Calu3 (cell line): ENCODE measurements at regions of chr9 and their contacts with region 1.

Region 1: GRCh38 chr9:119556129-119556875 is 187.1 kb upstream of the BRINP1 start:
- DNase-seq: peak; percentile 74
- H3K4me3 Mint-ChIP-seq: peak overlapping the region; percentile 55
- H3K27ac Mint-ChIP-seq: no peak overlapping the region
- H3K4me1 Mint-ChIP-seq: no peaks in the 10 kb centered on the region
- H3K27me3 Mint-ChIP-seq: peaks cover 16% of the 10 kb centered on the region
- CTCF ChIP-seq: peak; percentile 53

Region 2: DNA sequence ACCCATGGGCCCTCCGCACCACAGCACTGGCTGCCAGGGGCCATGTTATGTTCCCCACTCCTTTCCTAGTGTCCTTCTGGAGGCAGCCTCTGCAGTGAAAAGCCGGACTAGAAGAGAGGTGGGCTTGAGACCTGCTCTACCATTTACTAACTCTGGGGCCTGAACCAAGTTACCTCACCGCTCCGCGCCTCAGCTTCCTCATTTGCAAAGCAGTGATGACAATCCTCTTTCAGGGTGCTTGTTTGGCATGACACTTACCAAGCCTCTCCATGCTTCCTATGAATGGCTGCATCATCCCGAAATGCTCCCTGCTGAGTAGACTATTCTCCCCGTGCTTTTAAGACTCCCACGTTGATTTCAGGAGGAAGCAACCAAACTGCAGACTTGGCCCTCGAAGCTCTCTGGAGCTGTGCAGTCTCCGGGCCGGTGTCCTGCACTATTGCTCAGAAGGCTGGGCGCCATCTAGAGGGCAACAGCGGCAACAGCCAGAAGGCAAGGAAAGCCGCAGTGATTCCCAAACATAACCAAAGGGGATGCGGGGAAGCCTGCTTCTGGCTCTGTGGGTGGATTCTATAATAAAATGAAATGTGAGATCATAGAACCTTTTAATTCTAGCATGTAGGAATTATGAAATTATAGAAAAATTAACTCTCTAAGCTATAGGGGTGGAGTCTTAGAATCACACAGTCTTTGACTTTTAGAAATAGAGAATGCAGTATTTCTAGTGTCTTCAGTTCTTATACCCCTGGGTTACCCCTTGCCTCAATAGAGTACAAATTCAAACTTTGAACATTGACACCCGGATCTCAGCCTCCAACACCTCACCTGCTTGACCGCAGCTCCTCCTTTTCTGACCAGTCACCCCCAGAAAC is 412.8 kb after region 1 on chr9:
- CTCF ChIA-PET with region 1: no interaction called
- intact Hi-C with region 1: loop called (anchors 10 kb)
- DNase-seq: peak; percentile 65
- H3K4me3 Mint-ChIP-seq: no peak overlapping the region
- H3K27ac Mint-ChIP-seq: no peak overlapping the region
- H3K4me1 Mint-ChIP-seq: no peaks in the 10 kb centered on the region
- H3K27me3 Mint-ChIP-seq: peaks cover 36% of the 10 kb centered on the region
- CTCF ChIP-seq: peak; percentile 57

Region 3: DNA sequence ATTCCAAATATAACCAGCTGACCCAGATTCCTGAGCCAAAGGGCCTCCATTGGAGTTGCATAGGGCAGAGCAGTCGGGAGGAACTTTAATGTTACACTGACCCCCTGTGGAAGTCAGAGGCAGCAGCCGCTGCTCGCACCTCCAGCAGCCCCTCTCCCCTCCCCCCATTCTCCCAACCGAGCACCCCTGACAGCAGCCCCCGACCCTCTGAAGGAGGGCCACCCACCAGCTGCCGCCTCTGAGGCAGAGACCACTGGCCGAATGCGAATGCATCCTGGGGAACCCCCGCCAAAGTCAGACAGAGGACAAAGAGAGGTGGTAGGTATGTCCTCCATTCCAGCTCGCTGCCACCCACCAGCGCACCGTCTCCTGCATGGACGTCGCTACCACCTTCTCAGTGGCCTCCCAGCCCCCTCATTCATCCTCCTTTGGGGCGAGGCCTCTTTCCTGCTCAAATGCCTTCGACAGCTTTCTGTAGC is 792.7 kb after region 1 on chr9:
- CTCF ChIA-PET with region 1: no interaction called
- intact Hi-C with region 1: loop called (anchors 2 kb)
- DNase-seq: peak; percentile 42
- H3K4me3 Mint-ChIP-seq: no peak overlapping the region
- H3K27ac Mint-ChIP-seq: no peak overlapping the region
- H3K4me1 Mint-ChIP-seq: no peaks in the 10 kb centered on the region
- H3K27me3 Mint-ChIP-seq: peaks cover 28% of the 10 kb centered on the region
- CTCF ChIP-seq: peak; percentile 34

Region 4: GRCh38 chr9:120477521-120478001 is 921.3 kb after region 1 on chr9:
- CTCF ChIA-PET with region 1: interaction called, 4 read pairs
- intact Hi-C with region 1: loop called (anchors 5 kb)
- DNase-seq: peak; percentile 45
- H3K4me3 Mint-ChIP-seq: no peak overlapping the region
- H3K27ac Mint-ChIP-seq: no peak overlapping the region
- H3K4me1 Mint-ChIP-seq: peaks cover 8% of the 10 kb centered on the region
- H3K27me3 Mint-ChIP-seq: no peaks in the 10 kb centered on the region
- CTCF ChIP-seq: peak; percentile 38